HEK293 (cell line): ENCODE measurements at regions of chr10 and their contacts with region 1.

Region 1: GRCh38 chr10:15427843-15428414 is 56.8 kb upstream of the FAM171A1 start:
- H3K4me3 ChIP-seq: no peak overlapping the region
- H3K27ac ChIP-seq: no peak overlapping the region
- H3K4me1 ChIP-seq: peaks cover 5% of the 10 kb centered on the region; the same call in 1 of the 2 replicates
- CTCF ChIP-seq: 0 out of 2 replicates have a peak, but pooled peaks have one; percentile 13

Region 2: GRCh38 chr10:15439341-15439842 is 11.5 kb after region 1 on chr10:
- CTCF ChIA-PET with region 1: interaction called, 21 read pairs
- POLR2A ChIA-PET with region 1: interaction called, 3 read pairs
- H3K4me3 ChIP-seq: no peak overlapping the region
- H3K27ac ChIP-seq: peak overlapping the region; percentile 50
- H3K4me1 ChIP-seq: peaks cover 6% of the 10 kb centered on the region
- CTCF ChIP-seq: peak; percentile 21; the same call in 1 of the 2 replicates